ENCODE measurements at regions of chr20 and their contacts with region 1.

Region 1: DNA sequence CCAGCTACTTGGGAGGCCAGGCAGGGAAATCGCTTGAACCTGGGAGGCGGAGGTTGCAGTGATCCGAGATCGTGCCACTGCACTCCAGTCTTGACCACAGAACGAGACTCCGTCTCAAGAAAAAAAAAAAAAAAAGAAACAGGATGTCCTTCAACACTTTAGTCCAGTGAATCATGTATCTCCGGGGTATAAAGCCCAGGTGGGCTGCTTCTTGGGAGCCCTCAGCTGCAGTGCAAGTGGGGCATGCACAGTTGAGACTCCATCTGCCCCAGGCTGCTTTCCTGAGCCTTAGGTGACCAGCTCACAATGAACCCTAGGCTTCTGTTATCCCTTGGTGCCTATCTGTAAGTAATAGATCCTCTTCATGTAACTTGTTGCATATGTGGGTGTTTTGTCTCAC is 187.1 kb upstream of the RNF24 start:
- DNase-seq: no peak
- H3K4me3 ChIP-seq: no peak overlapping the region
- H3K27ac ChIP-seq: no peak overlapping the region
- H3K4me1 ChIP-seq: no peaks in the 10 kb centered on the region
- H3K27me3 ChIP-seq: no peaks in the 10 kb centered on the region
- CTCF ChIP-seq: no peak

Region 2: GRCh38 chr20:4384961-4385360 is 182.5 kb after region 1 on chr20:
- CTCF ChIA-PET with region 1: no interaction called
- POLR2A ChIA-PET with region 1: interaction called, 10 read pairs
- intact Hi-C with region 1: no loop called
- DNase-seq: no peak
- H3K4me3 ChIP-seq: no peak overlapping the region
- H3K27ac ChIP-seq: no peak overlapping the region
- H3K4me1 ChIP-seq: no peaks in the 10 kb centered on the region
- H3K27me3 ChIP-seq: peaks cover 17% of the 10 kb centered on the region; the same call in 1 of the 2 replicates
- CTCF ChIP-seq: no peak

Measured in PC-9 (cell line).